Left ventricle myocardium superior (tissue), 1 donor: ENCODE measurements at regions of chr1 and their contacts with region 1.

Region 1: DNA sequence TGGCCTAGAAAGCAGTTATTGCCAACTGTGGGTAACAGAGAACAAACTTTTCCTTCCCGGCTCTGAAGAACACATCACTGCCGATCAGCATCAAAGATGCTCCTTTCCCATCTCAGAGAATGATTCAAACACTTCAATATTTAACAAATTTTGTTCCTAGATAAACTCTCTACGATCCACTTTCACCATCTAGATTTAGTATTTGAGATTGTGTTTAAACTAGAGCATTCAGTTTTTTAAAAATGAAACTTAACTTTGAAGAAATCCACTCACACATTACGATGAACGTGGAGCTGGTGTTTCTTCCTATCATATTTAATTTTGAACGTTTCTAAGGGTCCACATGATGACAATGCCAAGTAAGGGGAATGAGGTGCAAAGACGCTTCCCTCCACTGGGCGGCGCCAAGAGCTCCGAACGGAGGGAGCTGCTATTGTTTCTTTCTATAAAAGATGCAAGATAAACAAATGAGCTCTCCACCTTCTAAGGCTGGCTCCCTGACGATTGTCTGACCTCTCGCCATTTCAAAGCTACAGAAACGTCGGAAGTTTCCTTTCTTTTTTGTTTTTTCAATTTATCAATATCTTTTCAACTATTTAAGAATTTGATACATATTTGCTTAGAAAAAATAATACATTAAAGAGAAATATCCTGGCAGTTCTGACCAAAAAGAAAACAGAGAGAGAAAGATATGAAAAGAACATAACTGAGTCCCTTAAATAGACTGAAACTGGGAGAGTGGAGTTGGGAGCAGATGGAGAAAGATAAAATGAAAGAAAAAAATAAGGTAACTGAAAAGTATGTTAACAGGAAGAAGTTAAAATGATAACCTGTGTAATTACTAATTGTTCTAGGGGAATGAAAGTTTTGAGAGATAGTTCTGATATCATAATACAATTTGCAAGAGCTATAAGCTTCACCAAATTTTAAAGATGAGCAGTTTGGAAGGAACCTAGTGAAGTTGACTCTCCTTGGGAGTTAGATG is 4.4 kb upstream of the BARHL2 start:
- DNase-seq: no peak
- ATAC-seq: no peak

Region 2: GRCh38 chr1:90671741-90672140 is 49.8 kb before region 1 on chr1:
- intact Hi-C with region 1: no loop called
- DNase-seq: no peak
- ATAC-seq: no peak

Region 3: GRCh38 chr1:90964444-90965035 is 243.0 kb after region 1 on chr1:
- intact Hi-C with region 1: loop called (anchors 10 kb)
- DNase-seq: no peak
- ATAC-seq: peak; percentile 29